Activated CD8-positive, alpha-beta memory T cell treated with anti-CD3 and anti-CD28 coated beads, Interleukin-2, amount 10 ng/mL, durations not matched to agents 7 days and 5 days (primary cell): ENCODE measurements at regions of chr3 and their contacts with region 1.

Region 1: DNA sequence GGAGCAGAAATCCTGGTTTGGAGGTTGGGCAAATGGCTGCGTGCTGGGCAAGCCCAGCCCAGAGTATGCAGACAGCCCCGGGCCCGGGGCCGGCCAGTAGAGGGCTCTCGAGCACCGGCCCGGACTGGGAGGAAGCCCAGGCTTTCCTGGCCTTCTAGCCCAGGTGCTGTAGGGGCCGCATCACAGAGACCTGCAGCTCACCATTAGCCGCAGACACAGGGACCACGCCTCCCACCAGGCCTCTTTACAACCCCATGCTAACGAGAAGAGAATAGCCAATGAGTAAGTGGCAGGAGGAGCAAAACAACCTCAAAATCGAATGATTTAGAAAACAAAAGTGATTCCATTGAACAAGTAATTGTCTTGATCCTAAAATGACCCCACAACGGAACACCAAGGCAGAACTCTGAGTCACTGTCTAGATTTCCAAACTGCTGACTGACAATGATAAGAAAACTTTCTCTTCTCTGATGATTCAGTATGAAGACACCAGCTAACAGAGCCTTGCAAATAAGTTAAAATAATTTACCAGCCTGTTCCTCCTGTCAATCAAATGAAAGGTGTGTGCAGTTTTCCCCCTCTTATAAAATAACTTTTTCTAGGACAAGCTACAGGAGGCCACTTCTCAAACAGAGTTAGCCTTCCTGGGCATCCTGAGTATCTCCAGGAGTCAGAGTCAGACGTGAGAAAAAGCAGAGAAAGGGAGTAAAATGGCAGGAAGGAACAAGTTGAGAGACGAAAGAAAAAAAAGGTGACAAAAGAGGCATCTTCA is 102.2 kb downstream of the DGKG start:
- DNase-seq: peak; percentile 73
- ATAC-seq: peak; percentile 98
- H3K4me3 Mint-ChIP-seq: no peak overlapping the region
- H3K27ac Mint-ChIP-seq: no peak overlapping the region
- H3K4me1 Mint-ChIP-seq: peaks cover 14% of the 10 kb centered on the region
- H3K27me3 Mint-ChIP-seq: peaks cover 11% of the 10 kb centered on the region

Region 2: GRCh38 chr3:186152889-186153292 is 106.9 kb before region 1 on chr3:
- CTCF ChIA-PET with region 1: no interaction called
- DNase-seq: no peak
- ATAC-seq: peak; percentile 51
- H3K4me3 Mint-ChIP-seq: no peak overlapping the region
- H3K27ac Mint-ChIP-seq: no peak overlapping the region
- H3K4me1 Mint-ChIP-seq: peaks cover 20% of the 10 kb centered on the region
- H3K27me3 Mint-ChIP-seq: peaks cover 57% of the 10 kb centered on the region

Region 3: DNA sequence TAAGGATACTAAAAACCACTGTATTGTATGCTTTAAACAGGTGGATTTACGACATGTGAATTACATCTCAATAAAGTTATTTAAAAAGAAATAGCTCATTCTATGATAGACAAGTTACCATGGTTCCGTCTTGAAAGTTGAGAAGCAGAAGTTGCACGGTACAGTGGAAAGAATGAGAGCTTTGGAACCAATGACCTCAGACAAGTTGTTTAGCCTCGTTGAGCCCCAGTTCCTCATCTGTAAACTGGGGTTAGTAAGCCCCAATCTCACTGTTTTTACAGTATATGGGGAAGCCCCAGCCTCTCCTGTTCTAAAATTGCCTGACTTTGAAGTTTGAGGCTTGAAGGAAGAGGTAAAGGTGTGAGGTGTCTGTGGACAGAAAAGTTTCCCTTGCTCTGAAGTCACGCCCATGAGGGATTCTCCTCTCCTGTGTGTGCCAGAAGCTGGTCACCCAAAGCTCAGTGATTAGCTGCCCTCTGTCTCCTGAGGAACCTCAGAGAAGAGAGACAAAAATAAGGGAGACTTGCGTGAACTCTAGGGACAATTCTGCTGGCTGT is 274.4 kb after region 1 on chr3:
- CTCF ChIA-PET with region 1: interaction called, 82 read pairs
- DNase-seq: peak; percentile 52
- ATAC-seq: peak; percentile 84
- H3K4me3 Mint-ChIP-seq: no peak overlapping the region
- H3K27ac Mint-ChIP-seq: no peak overlapping the region
- H3K4me1 Mint-ChIP-seq: peaks cover 27% of the 10 kb centered on the region
- H3K27me3 Mint-ChIP-seq: no peaks in the 10 kb centered on the region